Activated CD4-positive, alpha-beta T cell treated with anti-CD3 and anti-CD28 coated beads, Interleukin-2, amount 10 ng/mL, durations not matched to agents 24 days and 14 days (primary cell): ENCODE measurements at regions of chr1 and their contacts with region 1.

Region 1: DNA sequence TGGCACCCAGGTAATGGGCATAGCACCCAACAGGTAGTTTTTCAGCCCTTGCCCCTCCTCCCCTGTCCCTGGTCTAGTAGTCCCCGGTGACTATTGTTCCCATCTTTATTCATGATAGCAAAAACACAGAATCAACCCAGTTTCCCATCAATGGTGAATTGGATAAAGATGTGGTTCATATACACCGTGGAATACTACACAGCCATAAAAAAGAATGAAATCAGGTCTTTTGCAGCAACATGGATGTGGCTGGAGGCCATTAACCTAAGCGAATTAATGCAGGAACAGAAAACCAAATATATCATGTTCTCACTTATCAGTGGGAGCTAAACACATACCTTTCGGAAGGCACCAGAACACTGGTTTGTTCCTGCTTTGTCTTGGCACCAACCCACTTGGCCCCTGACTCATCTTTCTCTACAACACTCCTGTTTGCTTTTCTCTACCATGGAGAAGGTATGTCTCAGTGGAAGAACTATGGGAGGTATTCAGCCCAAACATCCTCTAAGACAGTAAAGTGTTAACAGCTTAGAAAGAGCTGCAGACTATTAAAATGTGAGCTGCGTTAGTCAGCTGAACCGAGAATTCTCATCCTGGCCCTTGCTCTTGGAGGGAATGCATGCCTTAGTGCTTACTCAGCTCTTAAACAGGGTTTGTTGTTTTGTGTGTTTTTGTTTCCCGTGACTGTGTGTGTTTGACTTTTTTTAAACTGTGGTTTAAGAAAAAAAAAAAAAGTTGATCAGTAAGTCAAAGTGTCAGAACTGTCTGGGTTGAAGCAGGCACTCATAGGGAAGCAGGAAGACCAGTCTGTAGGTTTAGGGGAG is 203.0 kb downstream of the TOMM20 start:
- DNase-seq: peak; percentile 78
- H3K4me3 Mint-ChIP-seq: peak overlapping the region; percentile 83
- H3K27ac Mint-ChIP-seq: peak overlapping the region; percentile 95
- H3K4me1 Mint-ChIP-seq: peaks cover 59% of the 10 kb centered on the region
- H3K27me3 Mint-ChIP-seq: no peaks in the 10 kb centered on the region

Region 2: DNA sequence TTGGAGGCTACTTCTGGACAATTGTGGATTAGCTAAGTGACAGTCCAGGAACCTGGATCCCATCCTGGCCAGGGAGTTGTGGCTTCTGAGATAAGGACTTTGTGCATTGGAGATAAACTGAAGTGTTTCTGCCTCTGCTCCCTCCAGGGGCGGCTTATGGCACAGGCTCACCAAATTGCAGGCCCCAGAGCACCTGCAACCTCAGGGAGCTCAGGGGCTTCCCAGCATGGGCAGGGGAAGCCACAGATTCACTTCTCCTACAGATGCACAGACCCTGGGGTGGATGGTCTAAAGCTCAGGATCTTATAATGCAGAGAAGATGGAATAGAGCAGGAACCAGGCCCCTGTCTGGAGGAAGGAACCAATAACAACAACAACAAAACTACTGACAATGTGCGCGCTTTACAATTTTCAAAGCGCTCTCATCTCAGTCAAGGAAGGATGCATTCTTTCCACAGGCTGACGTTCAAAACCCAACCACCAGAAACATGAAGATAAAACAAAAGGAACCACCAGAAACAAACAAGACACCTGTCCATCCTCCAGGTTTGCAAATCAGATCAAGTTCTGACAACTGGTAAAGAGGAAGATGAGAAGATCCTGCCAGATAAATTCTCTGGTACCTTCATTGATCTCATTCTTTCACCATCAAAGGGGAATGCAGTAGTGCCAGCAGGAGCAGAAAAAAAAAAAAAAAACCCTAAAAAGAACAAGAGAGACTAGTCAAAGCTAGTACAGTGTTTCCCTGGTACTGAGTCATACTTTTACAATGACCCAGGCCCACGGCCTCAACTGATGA is 194.7 kb before region 1 on chr1:
- intact Hi-C with region 1: loop called (anchors 1 kb)
- DNase-seq: peak; percentile 86
- H3K4me3 Mint-ChIP-seq: peak overlapping the region; percentile 68
- H3K27ac Mint-ChIP-seq: peak overlapping the region; percentile 96
- H3K4me1 Mint-ChIP-seq: peaks cover 77% of the 10 kb centered on the region
- H3K27me3 Mint-ChIP-seq: no peaks in the 10 kb centered on the region

Region 3: DNA sequence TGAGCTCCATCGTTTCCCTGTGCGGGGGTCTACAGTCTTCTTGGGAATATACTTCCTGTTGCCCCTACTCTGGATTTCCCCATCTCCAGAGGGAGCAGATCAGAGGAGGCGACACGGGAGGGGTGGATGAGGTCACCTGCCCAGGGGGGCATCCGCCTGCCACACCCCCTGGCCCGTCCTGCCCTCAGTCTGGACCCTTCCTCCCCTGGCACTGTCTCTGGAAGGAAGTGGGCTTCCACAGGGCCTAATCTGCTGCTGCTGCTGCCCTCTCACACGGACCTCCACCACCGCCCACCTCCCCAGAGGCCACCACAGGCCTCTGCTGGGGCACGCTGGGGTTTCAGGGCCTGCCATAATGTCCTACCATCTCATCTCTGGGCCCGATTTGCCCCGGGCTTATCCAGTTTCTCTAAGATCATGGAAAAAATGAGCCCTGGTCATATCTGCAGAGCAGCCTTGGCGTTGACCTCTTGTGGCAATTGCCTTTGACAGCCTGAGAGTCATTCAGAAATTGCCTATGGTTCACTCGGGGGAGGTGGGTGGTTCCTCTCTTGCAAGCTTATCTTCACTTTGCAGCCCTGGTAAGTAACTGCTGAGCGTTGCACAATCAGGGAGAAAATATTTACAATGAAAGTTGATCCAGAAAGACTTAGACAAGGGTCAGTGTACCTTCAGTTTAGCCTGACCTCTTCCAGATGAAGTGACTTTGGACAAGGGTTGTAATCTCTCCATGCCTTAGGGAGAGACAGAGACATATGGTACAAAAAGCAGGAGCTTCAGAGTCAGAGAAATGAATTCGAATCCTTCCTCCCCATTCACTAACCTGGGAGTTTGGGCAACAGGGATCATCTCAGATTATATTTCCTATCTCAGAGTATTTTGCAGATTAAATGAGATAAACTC is 49.4 kb before region 1 on chr1:
- intact Hi-C with region 1: loop called (anchors 1 kb)
- DNase-seq: no peak
- H3K4me3 Mint-ChIP-seq: peak overlapping the region; percentile 3
- H3K27ac Mint-ChIP-seq: peak overlapping the region; percentile 92
- H3K4me1 Mint-ChIP-seq: peaks cover 51% of the 10 kb centered on the region
- H3K27me3 Mint-ChIP-seq: no peaks in the 10 kb centered on the region

Region 4: GRCh38 chr1:234955107-234955731 is 29.6 kb after region 1 on chr1:
- intact Hi-C with region 1: loop called (anchors 1 kb)
- DNase-seq: peak; percentile 75
- H3K4me3 Mint-ChIP-seq: peak overlapping the region; percentile 50
- H3K27ac Mint-ChIP-seq: peak overlapping the region; percentile 96
- H3K4me1 Mint-ChIP-seq: peaks cover 61% of the 10 kb centered on the region
- H3K27me3 Mint-ChIP-seq: no peaks in the 10 kb centered on the region

Region 5: GRCh38 chr1:234963180-234963903 is 37.7 kb after region 1 on chr1:
- intact Hi-C with region 1: loop called (anchors 1 kb)
- DNase-seq: peak; percentile 96
- H3K4me3 Mint-ChIP-seq: peak overlapping the region; percentile 79
- H3K27ac Mint-ChIP-seq: peak overlapping the region; percentile 97
- H3K4me1 Mint-ChIP-seq: peaks cover 69% of the 10 kb centered on the region
- H3K27me3 Mint-ChIP-seq: no peaks in the 10 kb centered on the region